GM23248 (cell line): ENCODE measurements at regions of chr2 and their contacts with region 1.

Region 1: DNA sequence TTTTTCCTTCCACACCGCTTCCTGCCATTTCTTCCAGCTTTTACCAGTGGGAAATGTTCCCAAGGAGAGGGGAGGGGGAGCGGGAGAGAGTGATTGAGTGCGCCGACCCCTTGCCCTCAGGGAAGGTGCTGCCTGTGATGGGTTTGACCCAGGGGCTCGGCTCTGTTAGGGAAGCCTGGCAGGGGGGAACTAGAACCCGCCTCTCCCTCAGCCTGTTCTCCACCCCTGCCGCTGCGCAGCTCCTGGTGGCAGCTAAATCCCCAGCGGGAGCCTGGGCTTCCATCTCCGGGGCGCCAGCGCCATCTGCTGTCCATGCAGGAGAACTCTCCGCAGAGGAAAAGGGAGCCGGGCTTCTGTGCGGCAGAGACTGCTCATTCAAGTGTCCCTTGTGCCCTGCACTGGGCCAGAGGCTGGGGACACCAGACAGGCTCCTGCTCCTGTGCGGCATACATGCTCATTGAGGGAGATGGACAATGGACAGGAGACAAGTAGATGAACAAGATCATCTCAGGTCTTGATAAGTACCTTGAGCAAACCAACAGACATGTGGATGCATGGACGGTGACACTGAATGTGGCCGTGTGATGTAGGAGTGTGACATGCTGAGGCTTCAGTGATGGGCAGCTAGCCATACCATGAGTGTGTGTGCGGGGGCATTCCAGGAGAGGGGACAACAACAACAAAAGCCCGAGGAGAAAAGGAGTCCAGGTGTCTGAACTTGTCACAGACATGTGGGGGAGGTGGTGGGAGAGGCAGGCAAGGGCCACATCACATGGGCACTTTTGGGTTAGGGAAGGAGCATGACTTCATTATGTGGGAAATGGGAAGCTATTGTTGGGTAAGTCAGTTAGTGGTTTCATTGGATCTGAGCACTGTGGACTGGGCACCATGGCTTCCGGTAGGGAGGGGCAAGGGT is 13.3 kb downstream of the CHPF start:
- DNase-seq: peak; percentile 90
- H3K4me3 ChIP-seq: peak overlapping the region; percentile 53
- H3K27ac ChIP-seq: no peak overlapping the region
- H3K4me1 ChIP-seq: no peaks in the 10 kb centered on the region
- H3K27me3 ChIP-seq: peaks cover 19% of the 10 kb centered on the region; the same call in 1 of the 2 replicates

Region 2: GRCh38 chr2:219402665-219403515 is 127.4 kb before region 1 on chr2:
- in situ Hi-C with region 1: loop called (anchors 5 kb)
- DNase-seq: peak; percentile 95
- H3K4me3 ChIP-seq: no peak overlapping the region
- H3K27ac ChIP-seq: no peak overlapping the region
- H3K4me1 ChIP-seq: peaks cover 26% of the 10 kb centered on the region
- H3K27me3 ChIP-seq: no peaks in the 10 kb centered on the region